ENCODE measurements at regions of chr9 and their contacts with region 1.

Region 1: GRCh38 chr9:112793213-112793810 is 42.8 kb downstream of the SNX30 start:
- DNase-seq: peak; percentile 85
- ATAC-seq: peak; percentile 97
- H3K4me3 ChIP-seq: no peak overlapping the region
- H3K4me3 Mint-ChIP-seq: no peak overlapping the region
- H3K27ac ChIP-seq: no peak overlapping the region
- H3K27ac Mint-ChIP-seq: peak overlapping the region; percentile 46
- H3K4me1 ChIP-seq: peaks cover 6 to 7% of the 10 kb centered on the region in 2 donors
- H3K4me1 Mint-ChIP-seq: peaks cover 27% of the 10 kb centered on the region
- H3K27me3 ChIP-seq: no peaks in the 10 kb centered on the region
- H3K27me3 Mint-ChIP-seq: no peaks in the 10 kb centered on the region
- CTCF ChIP-seq: peak; percentile 88

Region 2: DNA sequence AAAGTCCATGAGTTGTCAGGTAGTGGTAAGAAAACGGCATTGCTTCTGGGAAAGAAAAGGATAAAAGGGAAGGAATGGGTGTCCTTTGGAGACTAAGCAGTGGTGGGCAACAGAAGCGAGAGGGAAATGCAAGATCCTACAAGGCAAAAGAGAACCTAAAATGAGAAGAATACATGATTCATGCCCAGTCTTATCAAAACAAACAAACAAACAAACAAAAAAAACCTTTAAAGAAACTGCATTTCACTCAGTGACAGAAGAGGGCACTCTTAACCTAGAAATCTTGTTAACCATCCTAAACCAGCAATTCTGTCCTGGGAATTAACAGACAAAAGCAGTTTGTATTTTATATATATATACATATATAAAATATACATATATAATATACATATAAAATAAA is 706.7 kb before region 1 on chr9:
- CTCF ChIA-PET with region 1: interaction called, 3 read pairs
- POLR2A ChIA-PET with region 1: no interaction called
- intact Hi-C with region 1: loop called (anchors 5 kb)
- DNase-seq: peak; percentile 36
- ATAC-seq: no peak
- H3K4me3 ChIP-seq: no peak overlapping the region
- H3K4me3 Mint-ChIP-seq: no peak overlapping the region
- H3K27ac ChIP-seq: no peak overlapping the region
- H3K27ac Mint-ChIP-seq: no peak overlapping the region
- H3K4me1 ChIP-seq: no peaks in the 10 kb centered on the region
- H3K4me1 Mint-ChIP-seq: no peaks in the 10 kb centered on the region
- H3K27me3 ChIP-seq: no peaks in the 10 kb centered on the region
- H3K27me3 Mint-ChIP-seq: no peaks in the 10 kb centered on the region
- CTCF ChIP-seq: peak; percentile 68

Region 3: DNA sequence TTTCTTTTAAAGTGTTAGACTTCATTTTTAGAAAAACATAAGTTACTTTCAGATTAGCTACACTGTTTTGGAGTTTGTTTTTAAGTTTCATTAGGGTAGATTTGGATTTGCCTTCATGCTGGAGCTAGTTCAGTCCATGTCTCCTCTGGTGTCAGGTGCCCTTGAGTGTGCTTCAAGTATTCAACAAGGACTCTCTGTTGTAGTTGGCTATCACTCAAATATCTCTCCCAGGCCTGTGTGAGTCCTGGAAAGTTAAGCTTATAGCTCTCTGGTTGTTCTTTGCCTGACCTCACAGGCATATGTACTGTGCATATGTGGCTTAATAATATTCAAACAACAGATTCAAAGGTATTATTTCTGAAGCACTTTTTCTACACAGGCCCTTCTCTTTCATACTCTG is 505.3 kb before region 1 on chr9:
- CTCF ChIA-PET with region 1: no interaction called
- POLR2A ChIA-PET with region 1: no interaction called
- intact Hi-C with region 1: no loop called
- DNase-seq: no peak
- ATAC-seq: no peak
- H3K4me3 ChIP-seq: no peak overlapping the region
- H3K4me3 Mint-ChIP-seq: no peak overlapping the region
- H3K27ac ChIP-seq: no peak overlapping the region
- H3K27ac Mint-ChIP-seq: no peak overlapping the region
- H3K4me1 ChIP-seq: peaks cover 0 to 5% of the 10 kb centered on the region in 2 donors
- H3K4me1 Mint-ChIP-seq: peaks cover 24% of the 10 kb centered on the region
- H3K27me3 ChIP-seq: no peaks in the 10 kb centered on the region
- H3K27me3 Mint-ChIP-seq: no peaks in the 10 kb centered on the region
- CTCF ChIP-seq: no peak

Region 4: GRCh38 chr9:112443200-112443599 is 350.1 kb before region 1 on chr9:
- CTCF ChIA-PET with region 1: interaction called, 57 read pairs
- POLR2A ChIA-PET with region 1: no interaction called
- intact Hi-C with region 1: no loop called
- DNase-seq: peak; percentile 49
- ATAC-seq: no peak
- H3K4me3 ChIP-seq: no peak overlapping the region
- H3K4me3 Mint-ChIP-seq: no peak overlapping the region
- H3K27ac ChIP-seq: no peak overlapping the region
- H3K27ac Mint-ChIP-seq: no peak overlapping the region
- H3K4me1 ChIP-seq: peaks cover 30 to 33% of the 10 kb centered on the region in 2 donors
- H3K4me1 Mint-ChIP-seq: peaks cover 29% of the 10 kb centered on the region
- H3K27me3 ChIP-seq: no peaks in the 10 kb centered on the region
- H3K27me3 Mint-ChIP-seq: no peaks in the 10 kb centered on the region
- CTCF ChIP-seq: peak; percentile 61

Region 5: GRCh38 chr9:112750111-112750767 is 43.1 kb before region 1 on chr9 and contains the start of gene SNX30:
- CTCF ChIA-PET with region 1: interaction called, 5 read pairs
- POLR2A ChIA-PET with region 1: interaction called, 4 read pairs
- intact Hi-C with region 1: loop called (anchors 1 kb)
- DNase-seq: peak; percentile 88
- ATAC-seq: peak; percentile 94
- H3K4me3 ChIP-seq: peak within 1 kb of the TSS; percentile 67 to 90 (median 83)
- H3K4me3 Mint-ChIP-seq: peak within 1 kb of the TSS; percentile 91
- H3K27ac ChIP-seq: peak within 1 kb of the TSS; percentile 55 to 69
- H3K27ac Mint-ChIP-seq: peak within 1 kb of the TSS; percentile 92
- H3K4me1 ChIP-seq: peaks cover 24 to 44% of the 10 kb centered on the region in 2 donors
- H3K4me1 Mint-ChIP-seq: peaks cover 45% of the 10 kb centered on the region
- H3K27me3 ChIP-seq: no peaks in the 10 kb centered on the region
- H3K27me3 Mint-ChIP-seq: no peaks in the 10 kb centered on the region
- CTCF ChIP-seq: no peak
- total RNA-seq, gene SNX30: 18.8 and 20.6 TPM in 2 replicates

Region 6: GRCh38 chr9:112757282-112757883 is 35.9 kb before region 1 on chr9:
- CTCF ChIA-PET with region 1: interaction called, 4 read pairs
- POLR2A ChIA-PET with region 1: no interaction called
- intact Hi-C with region 1: loop called (anchors 2 kb)
- DNase-seq: no peak
- ATAC-seq: no peak
- H3K4me3 ChIP-seq: no peak overlapping the region
- H3K4me3 Mint-ChIP-seq: no peak overlapping the region
- H3K27ac ChIP-seq: no peak overlapping the region
- H3K27ac Mint-ChIP-seq: no peak overlapping the region
- H3K4me1 ChIP-seq: peaks cover 20 to 29% of the 10 kb centered on the region in 2 donors
- H3K4me1 Mint-ChIP-seq: peaks cover 64% of the 10 kb centered on the region
- H3K27me3 ChIP-seq: no peaks in the 10 kb centered on the region
- H3K27me3 Mint-ChIP-seq: no peaks in the 10 kb centered on the region
- CTCF ChIP-seq: no peak

Region 7: DNA sequence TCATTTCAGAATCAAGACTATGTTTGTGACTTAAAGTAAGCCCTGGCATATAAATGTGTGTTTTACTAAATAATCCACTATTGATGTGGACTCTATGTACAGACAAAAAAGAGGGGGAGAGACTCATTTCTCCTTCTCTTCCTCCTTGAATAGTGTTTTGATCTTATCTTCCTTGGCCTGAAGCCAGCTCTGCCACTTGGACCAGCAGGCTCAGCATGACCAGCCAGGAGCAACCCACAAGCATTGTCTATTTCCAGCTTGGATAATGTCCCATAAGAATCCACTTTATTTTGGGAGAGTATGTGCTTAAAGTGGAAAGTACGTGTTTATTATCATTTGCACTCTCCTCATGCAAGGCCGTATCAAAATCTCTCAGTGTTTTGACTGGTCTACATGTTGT is 121.2 kb after region 1 on chr9:
- CTCF ChIA-PET with region 1: no interaction called
- POLR2A ChIA-PET with region 1: no interaction called
- intact Hi-C with region 1: no loop called
- DNase-seq: no peak
- ATAC-seq: no peak
- H3K4me3 ChIP-seq: no peak overlapping the region
- H3K4me3 Mint-ChIP-seq: no peak overlapping the region
- H3K27ac ChIP-seq: no peak overlapping the region
- H3K27ac Mint-ChIP-seq: no peak overlapping the region
- H3K4me1 ChIP-seq: no peaks in the 10 kb centered on the region
- H3K4me1 Mint-ChIP-seq: no peaks in the 10 kb centered on the region
- H3K27me3 ChIP-seq: no peaks in the 10 kb centered on the region
- H3K27me3 Mint-ChIP-seq: peaks cover 29% of the 10 kb centered on the region
- CTCF ChIP-seq: no peak

Measured in B cell (primary cell).